ENCODE measurements at regions of chr10 and their contacts with region 1.

Region 1: GRCh38 chr10:96334616-96335526 is 23.9 kb downstream of the OPALIN start:
- DNase-seq: peak; percentile 47
- H3K4me3 ChIP-seq: no peak overlapping the region; a peak in 1 of 4 replicates
- H3K27ac ChIP-seq: no peak overlapping the region
- H3K4me1 ChIP-seq: no peaks in the 10 kb centered on the region
- H3K27me3 ChIP-seq: no peaks in the 10 kb centered on the region; the same call in 1 of the 2 replicates
- CTCF ChIP-seq: peak; percentile 78
- EP300 ChIP-seq: no peak
- RAD21 ChIP-seq: peak; percentile 57

Region 2: DNA sequence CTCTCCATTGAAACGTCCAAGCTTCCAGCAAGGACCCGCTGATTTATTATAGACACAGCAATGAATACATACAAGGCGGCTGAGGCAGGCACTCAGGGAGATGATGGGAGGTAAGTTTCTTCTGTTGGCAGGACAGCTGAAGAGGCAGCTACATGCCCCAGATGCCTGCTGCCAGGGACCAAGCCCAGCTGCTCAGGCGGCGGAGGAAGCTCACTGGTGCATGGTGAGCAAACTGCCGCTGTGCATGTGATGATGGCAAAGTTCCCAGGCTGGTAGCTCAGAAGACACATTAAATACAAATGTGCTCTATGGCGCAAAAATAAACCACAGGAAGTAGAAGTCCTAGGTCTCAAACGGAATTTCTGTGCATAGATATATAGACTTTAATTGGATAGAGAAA is 28.4 kb before region 1 on chr10:
- CTCF ChIA-PET with region 1: interaction called, 17 read pairs
- POLR2A ChIA-PET with region 1: no interaction called
- DNase-seq: no peak
- H3K4me3 ChIP-seq: no peak overlapping the region
- H3K27ac ChIP-seq: no peak overlapping the region
- H3K4me1 ChIP-seq: no peaks in the 10 kb centered on the region
- H3K27me3 ChIP-seq: no peaks in the 10 kb centered on the region
- CTCF ChIP-seq: no peak
- EP300 ChIP-seq: no peak
- RAD21 ChIP-seq: no peak

Region 3: GRCh38 chr10:96346295-96346694 is 11.4 kb after region 1 on chr10:
- CTCF ChIA-PET with region 1: interaction called, 17 read pairs
- POLR2A ChIA-PET with region 1: no interaction called
- DNase-seq: no peak
- H3K4me3 ChIP-seq: no peak overlapping the region
- H3K27ac ChIP-seq: no peak overlapping the region
- H3K4me1 ChIP-seq: no peaks in the 10 kb centered on the region
- H3K27me3 ChIP-seq: no peaks in the 10 kb centered on the region; the same call in 1 of the 2 replicates
- CTCF ChIP-seq: no peak
- EP300 ChIP-seq: no peak
- RAD21 ChIP-seq: no peak